ENCODE measurements at regions of chr11 and their contacts with region 1.

Region 1: GRCh38 chr11:119018074-119018938 is at the starts of genes RPS25 and TRAPPC4:
- DNase-seq: peak; percentile 89 to 96
- H3K4me3 ChIP-seq: peak within 1 kb of the TSS; percentile 98
- H3K27ac ChIP-seq: peak within 1 kb of the TSS; percentile 78
- H3K4me1 ChIP-seq: peaks cover 36% of the 10 kb centered on the region
- H3K27me3 ChIP-seq: no peaks in the 10 kb centered on the region
- CTCF ChIP-seq: no peak
- total RNA-seq, gene RPS25: 954 and 984 TPM in 2 replicates
- total RNA-seq, gene TRAPPC4: 49.2 and 51.4 TPM in 2 replicates

Region 2: DNA sequence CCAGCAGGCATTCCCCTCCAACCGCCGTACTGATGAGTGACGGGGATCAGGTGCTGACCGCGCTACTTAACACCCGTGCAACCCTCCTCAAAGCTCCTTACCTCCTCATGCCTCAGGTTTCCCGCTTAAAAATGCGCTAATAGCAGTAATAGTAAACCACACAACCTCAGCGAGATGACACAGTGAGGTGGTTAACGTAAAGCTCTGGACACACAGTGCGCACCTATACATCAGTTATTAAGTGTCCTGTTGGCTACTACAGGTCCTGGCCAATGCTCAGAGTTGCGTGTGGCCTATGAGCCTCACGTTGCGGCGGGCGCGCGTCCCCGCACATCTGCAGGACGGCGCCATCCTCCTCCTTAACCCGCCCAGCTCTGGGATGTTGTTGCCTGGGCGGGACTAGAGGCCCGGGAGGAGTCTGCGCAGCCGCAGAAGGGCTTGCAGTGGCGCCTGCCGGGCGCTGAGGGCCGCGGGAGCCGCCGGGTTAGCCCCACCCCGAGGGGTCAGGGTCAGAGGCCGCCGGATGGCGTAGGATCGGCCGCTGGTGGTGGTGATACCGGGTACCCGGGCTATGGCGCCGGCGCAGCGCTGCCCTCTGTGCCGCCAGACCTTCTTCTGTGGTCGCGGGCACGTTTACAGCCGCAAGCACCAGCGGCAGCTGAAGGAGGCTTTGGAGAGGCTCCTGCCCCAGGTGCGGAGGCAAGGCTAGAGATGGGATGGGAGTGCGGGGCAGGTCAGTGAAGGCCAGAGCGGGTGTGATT is 20.5 kb before region 1 on chr11 and contains the start of gene CENATAC:
- CTCF ChIA-PET with region 1: no interaction called
- POLR2A ChIA-PET with region 1: interaction called, 14 read pairs
- intact Hi-C with region 1: no loop called
- DNase-seq: peak; percentile 82 to 89
- H3K4me3 ChIP-seq: peak within 1 kb of the TSS; percentile 86
- H3K27ac ChIP-seq: peak within 1 kb of the TSS; percentile 74
- H3K4me1 ChIP-seq: peaks cover 33% of the 10 kb centered on the region
- H3K27me3 ChIP-seq: no peaks in the 10 kb centered on the region
- CTCF ChIP-seq: no peak
- total RNA-seq, gene CENATAC: 61.7 and 73.9 TPM in 2 replicates

Region 3: GRCh38 chr11:119323538-119324033 is 305.3 kb after region 1 on chr11:
- CTCF ChIA-PET with region 1: no interaction called
- POLR2A ChIA-PET with region 1: no interaction called
- intact Hi-C with region 1: loop called (anchors 5 kb)
- DNase-seq: peak; percentile 59 to 71
- H3K4me3 ChIP-seq: no peak overlapping the region
- H3K27ac ChIP-seq: no peak overlapping the region
- H3K4me1 ChIP-seq: peaks cover 22% of the 10 kb centered on the region
- H3K27me3 ChIP-seq: no peaks in the 10 kb centered on the region
- CTCF ChIP-seq: peak; percentile 96